Upper lobe of right lung (tissue), 1 donor: ENCODE measurements at regions of chr6 and their contacts with region 1.

Region 1: GRCh38 chr6:41367700-41368099 is 32.3 kb downstream of the NCR2 start:
- DNase-seq: no peak
- ATAC-seq: peak; percentile 54
- H3K4me3 ChIP-seq: no peak overlapping the region
- H3K27ac ChIP-seq: no peak overlapping the region
- H3K4me1 ChIP-seq: peaks cover 9% of the 10 kb centered on the region
- H3K27me3 ChIP-seq: peaks cover 52% of the 10 kb centered on the region
- CTCF ChIP-seq: peak; percentile 42

Region 2: GRCh38 chr6:41531591-41532582 is 164.2 kb after region 1 on chr6:
- intact Hi-C with region 1: no loop called
- DNase-seq: no peak
- ATAC-seq: peak; percentile 31
- H3K4me3 ChIP-seq: no peak overlapping the region
- H3K27ac ChIP-seq: no peak overlapping the region
- H3K4me1 ChIP-seq: peaks cover 22% of the 10 kb centered on the region
- H3K27me3 ChIP-seq: peaks cover 10% of the 10 kb centered on the region
- CTCF ChIP-seq: no peak

Region 3: DNA sequence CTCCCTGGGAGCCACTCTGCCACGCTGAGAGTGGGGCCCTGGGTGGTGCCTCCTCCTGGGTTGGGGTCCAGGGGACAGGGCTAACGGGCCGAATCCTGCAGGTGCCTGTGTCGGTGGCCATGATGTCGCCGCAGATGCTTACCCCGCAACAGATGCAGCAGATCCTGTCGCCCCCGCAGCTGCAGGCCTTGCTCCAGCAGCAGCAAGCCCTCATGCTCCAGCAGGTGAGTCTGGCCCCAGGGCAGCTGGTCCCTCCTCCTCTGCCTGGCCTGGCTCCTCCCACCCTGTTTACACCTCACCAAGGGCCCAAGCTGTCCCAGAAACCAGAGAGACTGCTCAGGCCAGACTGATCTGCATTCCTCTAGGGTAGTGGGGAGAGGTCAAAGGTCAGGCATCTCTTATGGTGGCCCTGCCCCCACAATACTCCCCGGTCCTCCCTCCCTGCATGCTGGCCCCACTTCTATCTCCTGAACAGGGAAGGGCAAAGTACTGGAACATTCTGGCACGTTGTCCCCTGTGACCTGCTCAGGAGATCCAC is 217.0 kb after region 1 on chr6:
- intact Hi-C with region 1: loop called (anchors 5 kb)
- DNase-seq: no peak
- ATAC-seq: peak; percentile 52
- H3K4me3 ChIP-seq: no peak overlapping the region
- H3K27ac ChIP-seq: no peak overlapping the region
- H3K4me1 ChIP-seq: no peaks in the 10 kb centered on the region
- H3K27me3 ChIP-seq: no peaks in the 10 kb centered on the region
- CTCF ChIP-seq: no peak